ENCODE measurements at regions of chr9 and their contacts with region 1.

Region 1: DNA sequence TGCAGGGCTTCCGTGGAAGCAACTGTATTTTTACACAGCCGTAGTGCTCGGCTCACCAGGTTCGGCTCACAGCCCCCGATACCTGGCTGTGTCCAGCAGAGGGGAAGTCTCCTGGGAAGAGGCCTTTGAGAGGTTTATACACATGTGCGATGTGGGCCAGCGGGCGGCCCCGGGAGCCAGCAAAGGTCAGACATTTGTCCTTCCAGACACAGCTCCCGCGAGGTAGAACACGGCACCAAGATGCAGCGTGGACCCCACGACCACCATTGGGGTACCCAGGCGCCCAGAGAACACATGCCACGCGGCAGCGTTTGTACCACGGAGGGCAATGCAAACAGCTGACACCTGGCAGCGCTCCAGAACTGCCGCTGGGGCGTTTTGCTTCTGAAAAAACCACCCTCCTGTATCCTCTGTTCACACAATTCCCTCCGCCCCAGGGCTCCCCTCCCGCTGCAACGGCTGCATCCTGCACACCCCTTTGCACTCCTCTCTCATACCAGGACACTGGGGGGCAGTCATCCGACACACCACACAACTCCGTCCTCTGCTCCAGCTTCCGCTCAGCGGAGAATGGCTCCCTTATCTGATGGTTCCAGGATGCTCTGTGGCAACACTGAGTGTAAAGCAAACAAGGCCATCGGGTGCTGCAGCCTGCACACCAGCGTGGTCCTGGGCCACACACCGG is 235.3 kb downstream of the SYK start:
- DNase-seq: peak; percentile 63 to 84 (median 70)
- ATAC-seq: peak; percentile 100
- H3K4me3 ChIP-seq: no peak overlapping the region
- H3K27ac ChIP-seq: no peak overlapping the region
- H3K4me1 ChIP-seq: peaks cover 5 to 10% of the 10 kb centered on the region in 2 experiments; a peak in 3 of 5 replicates
- H3K27me3 ChIP-seq: peaks cover 2 to 43% of the 10 kb centered on the region in 2 experiments; a peak in 3 of 5 replicates
- CTCF ChIP-seq: peak; percentile 67 to 75 (median 68)
- EP300 ChIP-seq: 0 out of 2 replicates have a peak, but pooled peaks have one; percentile 33
- POLR2A ChIP-seq: no peak
- RAD21 ChIP-seq: peak; percentile 84 to 87

Region 2: DNA sequence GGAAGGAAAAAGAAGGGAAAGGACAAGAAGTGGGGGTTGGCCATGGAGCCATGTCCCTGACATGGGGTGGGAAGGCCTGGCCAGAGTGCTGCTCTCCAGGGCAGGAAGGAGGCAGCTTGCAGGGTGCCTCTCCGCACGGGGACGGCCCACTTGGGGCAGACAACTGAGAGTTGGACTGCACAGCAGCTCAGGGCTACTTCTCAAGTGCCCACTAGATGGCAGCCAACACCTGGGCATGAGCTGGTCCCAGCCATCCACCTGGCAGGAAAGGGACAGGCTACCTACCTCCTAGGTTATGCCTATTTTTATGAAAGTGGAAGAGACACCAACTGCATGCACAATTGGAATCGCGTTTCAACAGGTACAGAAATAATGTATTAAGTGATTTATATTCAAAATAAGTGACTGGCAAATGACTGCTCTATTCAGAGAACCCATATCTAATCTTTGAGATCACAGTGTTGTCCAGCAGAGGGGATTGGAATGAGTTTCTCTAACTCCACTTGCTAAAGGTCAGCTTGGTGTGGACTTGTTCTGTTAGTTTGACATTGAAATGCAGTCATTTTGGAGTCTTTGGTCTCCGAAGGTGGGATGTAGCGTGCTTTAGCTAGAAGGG is 122.0 kb before region 1 on chr9:
- CTCF ChIA-PET with region 1: no interaction called
- POLR2A ChIA-PET with region 1: no interaction called
- in situ Hi-C with region 1: no loop called
- intact Hi-C with region 1: loop called (anchors 10 kb)
- DNase-seq: peak; percentile 72 to 76 (median 75)
- ATAC-seq: peak; percentile 98
- H3K4me3 ChIP-seq: no peak overlapping the region
- H3K27ac ChIP-seq: no peak overlapping the region
- H3K4me1 ChIP-seq: no peaks in the 10 kb centered on the region
- H3K27me3 ChIP-seq: peaks cover 0 to 22% of the 10 kb centered on the region in 2 experiments; a peak in 2 of 5 replicates
- CTCF ChIP-seq: peak; percentile 78 to 84 (median 80)
- EP300 ChIP-seq: no peak
- POLR2A ChIP-seq: no peak
- RAD21 ChIP-seq: peak; percentile 78 to 88

Region 3: GRCh38 chr9:91047993-91048607 is 11.1 kb after region 1 on chr9:
- CTCF ChIA-PET with region 1: no interaction called
- POLR2A ChIA-PET with region 1: no interaction called
- in situ Hi-C with region 1: no loop called
- intact Hi-C with region 1: no loop called
- DNase-seq: no peak
- ATAC-seq: no peak
- H3K4me3 ChIP-seq: no peak overlapping the region
- H3K27ac ChIP-seq: no peak overlapping the region
- H3K4me1 ChIP-seq: no peaks in the 10 kb centered on the region
- H3K27me3 ChIP-seq: peaks cover 0 to 19% of the 10 kb centered on the region in 2 experiments; a peak in 4 of 5 replicates
- CTCF ChIP-seq: no peak
- EP300 ChIP-seq: no peak
- POLR2A ChIP-seq: no peak
- RAD21 ChIP-seq: no peak

Region 4: DNA sequence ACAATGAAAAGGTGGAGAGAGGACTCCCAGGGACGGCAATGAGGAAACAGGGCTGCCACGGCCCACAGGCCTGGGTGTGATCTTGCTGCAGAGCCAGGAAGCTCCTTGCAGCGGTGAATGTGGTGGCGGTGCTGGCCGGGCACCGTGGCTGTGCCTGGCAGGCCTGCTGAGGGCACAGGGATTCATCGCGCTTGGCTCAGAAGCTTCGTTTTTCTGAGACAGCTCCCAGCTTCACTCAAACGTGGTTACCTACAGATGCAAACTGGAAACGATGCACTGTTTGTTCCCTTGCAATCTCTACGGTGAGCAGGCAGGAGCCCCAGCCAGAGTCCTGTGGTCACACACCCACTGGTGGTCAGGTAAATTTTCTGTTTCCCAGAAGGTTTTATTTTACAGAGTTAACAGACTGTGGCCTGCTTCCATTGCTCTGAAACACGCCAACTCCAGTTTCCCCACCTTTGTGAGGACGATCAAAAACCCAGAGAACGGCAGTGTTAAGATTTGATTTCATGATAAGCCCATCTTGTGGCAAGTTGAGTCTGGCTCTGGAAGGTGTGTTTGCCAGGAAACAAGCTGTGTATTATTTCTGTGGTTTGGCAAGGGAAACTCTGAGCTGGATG is 140.8 kb after region 1 on chr9:
- CTCF ChIA-PET with region 1: no interaction called
- POLR2A ChIA-PET with region 1: no interaction called
- in situ Hi-C with region 1: no loop called
- intact Hi-C with region 1: loop called (anchors 5 kb)
- DNase-seq: no peak
- ATAC-seq: no peak
- H3K4me3 ChIP-seq: no peak overlapping the region
- H3K27ac ChIP-seq: no peak overlapping the region
- H3K4me1 ChIP-seq: peaks cover 6 to 14% of the 10 kb centered on the region in 2 experiments
- H3K27me3 ChIP-seq: no peaks in the 10 kb centered on the region
- CTCF ChIP-seq: no peak
- EP300 ChIP-seq: no peak
- POLR2A ChIP-seq: no peak
- RAD21 ChIP-seq: no peak

Region 5: DNA sequence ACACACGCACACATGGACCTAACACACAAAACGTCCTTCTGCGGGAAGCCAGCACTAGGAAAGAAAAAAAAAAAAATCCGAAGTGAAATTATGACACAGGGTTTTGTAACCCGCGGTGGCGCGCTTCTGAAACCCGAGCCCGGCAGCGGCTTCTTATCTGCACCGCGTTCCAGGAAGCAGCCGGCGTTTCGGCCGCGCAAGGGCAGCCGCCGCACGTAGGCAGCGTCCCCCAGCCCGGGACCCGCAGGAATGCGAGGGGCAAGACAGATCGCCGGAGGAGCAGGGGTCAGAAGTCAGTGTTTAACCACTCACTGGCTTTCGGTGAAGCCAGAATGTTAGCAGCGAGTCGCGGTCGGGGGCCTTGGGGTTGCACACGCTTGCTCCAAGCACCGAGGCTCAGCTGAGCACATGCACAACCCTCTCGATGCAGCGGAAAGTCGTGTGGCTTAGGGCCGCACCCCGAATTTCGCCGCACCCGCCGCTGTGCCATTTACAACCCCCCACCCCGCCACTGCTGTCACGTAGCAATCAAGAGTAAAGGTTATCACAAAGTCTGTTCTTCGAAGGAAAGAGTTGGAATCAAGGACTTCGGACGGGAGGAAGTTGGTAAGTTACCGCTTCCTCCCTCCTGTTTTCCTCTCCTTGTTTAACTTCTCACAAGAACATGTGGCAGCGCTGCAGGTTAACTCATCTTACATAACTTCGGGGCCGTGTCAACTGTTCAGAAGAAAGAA is 156.9 kb after region 1 on chr9:
- CTCF ChIA-PET with region 1: no interaction called
- POLR2A ChIA-PET with region 1: no interaction called
- in situ Hi-C with region 1: no loop called
- intact Hi-C with region 1: loop called (anchors 5 kb)
- DNase-seq: peak; percentile 69 to 92 (median 75)
- ATAC-seq: peak; percentile 85
- H3K4me3 ChIP-seq: peak overlapping the region; percentile 31
- H3K27ac ChIP-seq: peak overlapping the region; percentile 99
- H3K4me1 ChIP-seq: peaks cover 26 to 60% of the 10 kb centered on the region in 2 experiments
- H3K27me3 ChIP-seq: no peaks in the 10 kb centered on the region
- CTCF ChIP-seq: peak in 1 of 3 experiments; percentile 21; a peak in 1 of 6 replicates
- EP300 ChIP-seq: peak; percentile 71
- POLR2A ChIP-seq: peak; percentile 81
- RAD21 ChIP-seq: peak in 1 of 2 experiments; percentile 28; a peak in 1 of 4 replicates

Region 6: GRCh38 chr9:91676046-91676445 is 639.1 kb after region 1 on chr9:
- CTCF ChIA-PET with region 1: no interaction called
- POLR2A ChIA-PET with region 1: no interaction called
- in situ Hi-C with region 1: no loop called
- intact Hi-C with region 1: loop called (anchors 10 kb)
- DNase-seq: peak in 1 of 4 experiments; percentile 25
- ATAC-seq: peak; percentile 65; the same call in 2 of the 3 replicates
- H3K4me3 ChIP-seq: no peak overlapping the region
- H3K27ac ChIP-seq: no peak overlapping the region
- H3K4me1 ChIP-seq: no peaks in the 10 kb centered on the region
- H3K27me3 ChIP-seq: peaks cover 0 to 6% of the 10 kb centered on the region in 2 experiments; a peak in 1 of 5 replicates
- CTCF ChIP-seq: peak; percentile 34 to 48 (median 46); a peak in 4 of 6 replicates
- EP300 ChIP-seq: no peak
- POLR2A ChIP-seq: no peak
- RAD21 ChIP-seq: peak; percentile 14 to 47; a peak in 2 of 4 replicates

Measured in K562 (cell line).